ENCODE measurements at regions of chr11 and their contacts with region 1.

Region 1: GRCh38 chr11:33987975-33988580 is 63.5 kb upstream of the CAPRIN1 start:
- DNase-seq: peak; percentile 67 to 76
- H3K4me3 ChIP-seq: no peak overlapping the region
- H3K27ac ChIP-seq: no peak overlapping the region
- H3K4me1 ChIP-seq: no peaks in the 10 kb centered on the region
- H3K27me3 ChIP-seq: no peaks in the 10 kb centered on the region
- CTCF ChIP-seq: peak; percentile 96

Region 2: DNA sequence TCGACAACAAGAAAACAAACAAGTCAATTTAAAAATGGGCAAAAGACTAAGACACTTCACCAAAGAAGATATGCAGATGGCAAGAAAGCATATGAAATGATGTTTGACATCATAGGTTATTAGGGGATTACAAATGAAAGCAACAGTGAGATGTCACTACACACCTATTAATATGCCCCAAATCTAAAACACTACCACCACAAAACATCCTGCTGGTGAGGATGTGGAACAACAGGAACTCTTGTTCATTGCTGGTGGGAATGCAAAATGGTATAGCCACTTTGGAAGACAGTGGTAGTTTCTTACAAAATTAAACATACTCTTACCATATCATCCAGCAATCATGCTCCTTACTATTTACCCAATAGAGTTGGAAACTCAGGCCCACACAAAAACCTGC is 1129.3 kb before region 1 on chr11:
- CTCF ChIA-PET with region 1: no interaction called
- POLR2A ChIA-PET with region 1: interaction called, 17 read pairs
- intact Hi-C with region 1: no loop called
- DNase-seq: no peak
- H3K4me3 ChIP-seq: no peak overlapping the region
- H3K27ac ChIP-seq: no peak overlapping the region
- H3K4me1 ChIP-seq: no peaks in the 10 kb centered on the region
- H3K27me3 ChIP-seq: no peaks in the 10 kb centered on the region
- CTCF ChIP-seq: peak; percentile 38; the same call in 1 of the 2 replicates

Region 3: GRCh38 chr11:33835143-33835878 is 152.8 kb before region 1 on chr11:
- CTCF ChIA-PET with region 1: interaction called, 10 read pairs
- POLR2A ChIA-PET with region 1: no interaction called
- intact Hi-C with region 1: loop called (anchors 1 kb)
- DNase-seq: peak; percentile 18 to 69
- H3K4me3 ChIP-seq: no peak overlapping the region
- H3K27ac ChIP-seq: no peak overlapping the region
- H3K4me1 ChIP-seq: peaks cover 32% of the 10 kb centered on the region
- H3K27me3 ChIP-seq: no peaks in the 10 kb centered on the region
- CTCF ChIP-seq: peak; percentile 79

Region 4: DNA sequence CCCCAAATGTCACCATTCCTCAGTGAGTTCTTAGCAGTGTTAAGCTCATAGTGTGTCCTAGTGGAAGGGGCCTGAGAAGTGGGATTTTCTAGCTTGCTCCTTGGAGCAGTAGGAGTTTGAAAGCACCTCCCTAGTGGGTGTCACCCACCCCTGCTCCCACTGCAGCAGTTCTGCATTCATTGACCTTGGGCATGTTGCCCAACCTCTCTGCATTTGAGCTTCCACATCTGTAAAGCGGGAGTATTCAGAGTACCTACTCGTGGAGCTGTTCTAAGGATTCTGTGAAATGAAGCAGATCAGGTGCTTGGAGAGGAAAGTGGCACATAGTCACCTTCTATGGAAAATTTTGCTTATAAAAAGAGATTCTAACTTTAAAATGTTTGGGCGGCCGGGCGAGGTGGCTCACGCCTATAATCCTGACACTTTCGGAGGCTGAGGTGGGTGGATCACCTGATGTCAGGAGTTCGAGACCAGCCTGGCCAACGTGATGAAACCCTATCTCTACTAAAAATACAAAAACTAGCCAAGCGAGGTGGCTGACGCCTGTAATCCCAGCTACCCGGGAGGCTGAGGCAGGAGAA is 113.1 kb before region 1 on chr11:
- CTCF ChIA-PET with region 1: interaction called, 11 read pairs
- POLR2A ChIA-PET with region 1: no interaction called
- intact Hi-C with region 1: no loop called
- DNase-seq: no peak
- H3K4me3 ChIP-seq: no peak overlapping the region
- H3K27ac ChIP-seq: no peak overlapping the region
- H3K4me1 ChIP-seq: no peaks in the 10 kb centered on the region
- H3K27me3 ChIP-seq: peaks cover 61% of the 10 kb centered on the region
- CTCF ChIP-seq: no peak

Region 5: GRCh38 chr11:33889296-33889695 is 98.8 kb before region 1 on chr11:
- CTCF ChIA-PET with region 1: no interaction called
- POLR2A ChIA-PET with region 1: no interaction called
- intact Hi-C with region 1: no loop called
- DNase-seq: no peak
- H3K4me3 ChIP-seq: no peak overlapping the region
- H3K27ac ChIP-seq: no peak overlapping the region
- H3K4me1 ChIP-seq: no peaks in the 10 kb centered on the region
- H3K27me3 ChIP-seq: peaks cover 31% of the 10 kb centered on the region
- CTCF ChIP-seq: no peak

Region 6: GRCh38 chr11:34013898-34014571 is 26.0 kb after region 1 on chr11:
- CTCF ChIA-PET with region 1: interaction called, 10 read pairs
- POLR2A ChIA-PET with region 1: no interaction called
- intact Hi-C with region 1: no loop called
- DNase-seq: no peak
- H3K4me3 ChIP-seq: no peak overlapping the region
- H3K27ac ChIP-seq: no peak overlapping the region
- H3K4me1 ChIP-seq: no peaks in the 10 kb centered on the region
- H3K27me3 ChIP-seq: no peaks in the 10 kb centered on the region
- CTCF ChIP-seq: no peak

Region 7: DNA sequence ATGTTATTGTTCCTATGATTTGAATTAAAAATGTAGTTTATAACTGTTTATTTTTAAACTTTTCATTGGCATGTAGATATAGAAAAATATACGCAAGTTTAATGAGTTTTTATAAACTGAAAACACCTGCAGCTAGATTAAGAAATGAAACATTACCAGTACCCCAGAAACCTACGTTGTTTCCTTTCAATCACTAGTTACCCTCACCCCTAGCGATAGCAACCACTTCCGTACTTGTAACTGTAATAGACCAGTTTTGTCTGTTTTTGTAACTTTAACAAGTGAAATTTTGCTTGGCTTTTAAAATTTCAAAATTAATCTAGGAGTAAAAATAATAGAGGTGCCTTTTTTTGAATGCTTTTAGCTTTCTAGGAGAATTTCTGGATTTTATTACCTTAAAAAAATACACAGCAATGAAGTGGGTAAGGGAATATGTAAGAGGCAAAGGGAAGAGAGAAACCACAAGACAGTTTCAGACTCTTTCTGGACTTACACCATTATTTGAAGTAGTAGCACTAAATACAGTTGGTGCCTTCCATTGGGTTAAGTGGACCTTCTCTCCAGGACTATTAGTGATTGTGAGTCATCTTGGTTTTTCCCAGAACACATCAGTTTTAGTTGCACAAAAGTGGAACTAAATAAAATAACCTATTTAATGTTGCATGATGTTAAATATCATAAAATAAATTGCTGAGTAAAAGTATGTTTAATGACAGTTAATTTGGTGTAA is 98.6 kb after region 1 on chr11:
- CTCF ChIA-PET with region 1: no interaction called
- POLR2A ChIA-PET with region 1: no interaction called
- intact Hi-C with region 1: no loop called
- DNase-seq: no peak
- H3K4me3 ChIP-seq: no peak overlapping the region
- H3K27ac ChIP-seq: no peak overlapping the region
- H3K4me1 ChIP-seq: no peaks in the 10 kb centered on the region
- H3K27me3 ChIP-seq: no peaks in the 10 kb centered on the region
- CTCF ChIP-seq: no peak

Region 8: GRCh38 chr11:34098813-34099212 is 110.7 kb after region 1 on chr11:
- CTCF ChIA-PET with region 1: no interaction called
- POLR2A ChIA-PET with region 1: no interaction called
- intact Hi-C with region 1: no loop called
- DNase-seq: no peak
- H3K4me3 ChIP-seq: no peak overlapping the region
- H3K27ac ChIP-seq: no peak overlapping the region
- H3K4me1 ChIP-seq: no peaks in the 10 kb centered on the region
- H3K27me3 ChIP-seq: no peaks in the 10 kb centered on the region
- CTCF ChIP-seq: no peak

Region 9: GRCh38 chr11:35412285-35412684 is 1424.2 kb after region 1 on chr11:
- CTCF ChIA-PET with region 1: no interaction called
- POLR2A ChIA-PET with region 1: no interaction called
- intact Hi-C with region 1: no loop called
- DNase-seq: no peak
- H3K4me3 ChIP-seq: no peak overlapping the region
- H3K27ac ChIP-seq: no peak overlapping the region
- H3K4me1 ChIP-seq: no peaks in the 10 kb centered on the region
- H3K27me3 ChIP-seq: peaks cover 28% of the 10 kb centered on the region
- CTCF ChIP-seq: peak; percentile 78